ENCODE measurements at regions of chr5 and their contacts with region 1.

Region 1: DNA sequence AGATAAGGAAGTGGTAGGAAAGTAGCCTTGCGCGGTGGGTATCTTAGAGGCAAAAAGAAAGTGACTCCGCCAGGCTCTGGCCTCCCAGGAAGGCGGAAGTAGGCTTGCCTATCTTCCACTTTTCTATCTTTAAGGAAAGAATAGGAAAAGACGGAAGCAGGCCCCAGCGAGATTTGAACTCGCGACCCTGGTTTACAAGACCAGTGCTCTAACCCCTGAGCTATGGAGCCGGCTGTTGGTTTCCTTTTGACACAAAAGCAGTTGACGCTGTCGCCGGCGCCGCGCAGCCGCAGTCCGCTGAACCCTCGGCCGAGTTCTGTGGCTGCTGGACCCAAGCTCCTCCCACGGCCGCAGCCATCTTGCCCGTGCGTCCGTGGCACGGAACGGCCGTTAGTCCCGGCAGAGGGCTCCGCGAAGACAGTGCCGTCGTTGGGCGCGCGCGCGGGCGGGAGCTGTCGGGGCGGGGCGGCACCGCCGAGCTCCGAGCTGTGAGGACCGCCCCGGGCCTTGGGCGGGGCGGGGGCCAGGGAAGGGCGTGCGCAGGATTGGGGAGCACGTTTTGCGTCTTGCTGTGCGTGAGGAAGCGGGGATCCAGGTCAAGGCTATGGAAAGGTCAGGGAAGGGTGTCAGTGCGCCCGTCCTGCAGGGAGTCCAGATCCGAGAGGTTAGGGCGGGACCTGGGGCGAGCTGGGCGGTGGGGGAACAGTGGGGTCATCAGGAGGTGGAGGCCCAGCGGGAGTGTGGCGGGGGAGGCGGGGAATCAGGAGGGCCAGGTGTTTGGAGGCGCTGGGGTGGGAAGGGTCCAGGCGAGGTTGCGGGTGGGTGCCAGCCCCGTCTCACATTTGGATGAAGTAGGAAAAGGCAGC is 13.2 kb downstream of the TRIM7 start:
- DNase-seq: peak; percentile 94
- H3K4me3 ChIP-seq: peak overlapping the region; percentile 71
- H3K27ac ChIP-seq: peak overlapping the region; percentile 84
- H3K4me1 ChIP-seq: no peaks in the 10 kb centered on the region
- H3K27me3 ChIP-seq: no peaks in the 10 kb centered on the region
- CTCF ChIP-seq: no peak

Region 2: DNA sequence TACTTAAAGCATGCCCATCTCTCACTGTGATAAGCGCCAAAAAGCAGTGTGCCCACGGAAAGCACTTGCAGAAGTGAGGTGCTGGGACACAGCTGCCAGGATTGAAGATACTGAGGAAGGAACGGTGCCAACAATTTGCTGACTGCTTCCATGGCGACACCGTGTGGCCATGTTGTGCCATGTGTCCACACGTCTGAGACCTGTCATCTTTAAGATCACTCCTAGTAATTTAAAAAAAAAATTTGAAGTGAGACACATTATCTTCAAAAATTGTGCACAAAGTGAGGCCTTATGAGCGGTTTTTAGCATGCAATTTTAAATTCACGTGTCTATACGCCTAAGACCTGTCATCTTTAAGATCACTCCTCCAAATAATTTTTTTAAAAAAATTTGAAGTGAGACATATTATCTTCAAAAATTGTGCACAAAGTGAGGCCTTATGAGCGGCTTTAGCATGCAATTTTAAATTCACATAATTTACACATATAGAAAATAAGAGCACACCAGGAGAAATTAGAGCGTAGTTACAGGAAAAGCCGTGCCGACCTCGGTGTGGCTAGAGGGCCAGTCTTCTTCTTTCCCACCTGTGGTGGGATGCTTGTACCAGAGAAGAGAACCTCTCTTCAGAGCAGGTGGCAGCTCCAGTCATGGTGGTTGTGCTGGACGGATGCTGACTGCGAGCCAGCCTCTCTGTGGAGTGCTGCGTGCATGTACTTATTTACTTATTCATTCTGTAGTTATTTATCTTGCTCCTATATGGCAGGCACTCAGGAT is 521.0 kb before region 1 on chr5:
- CTCF ChIA-PET with region 1: no interaction called
- POLR2A ChIA-PET with region 1: no interaction called
- intact Hi-C with region 1: no loop called
- DNase-seq: peak; percentile 49
- H3K4me3 ChIP-seq: no peak overlapping the region
- H3K27ac ChIP-seq: no peak overlapping the region
- H3K4me1 ChIP-seq: no peaks in the 10 kb centered on the region
- H3K27me3 ChIP-seq: peaks cover 15% of the 10 kb centered on the region
- CTCF ChIP-seq: peak; percentile 76

Region 3: DNA sequence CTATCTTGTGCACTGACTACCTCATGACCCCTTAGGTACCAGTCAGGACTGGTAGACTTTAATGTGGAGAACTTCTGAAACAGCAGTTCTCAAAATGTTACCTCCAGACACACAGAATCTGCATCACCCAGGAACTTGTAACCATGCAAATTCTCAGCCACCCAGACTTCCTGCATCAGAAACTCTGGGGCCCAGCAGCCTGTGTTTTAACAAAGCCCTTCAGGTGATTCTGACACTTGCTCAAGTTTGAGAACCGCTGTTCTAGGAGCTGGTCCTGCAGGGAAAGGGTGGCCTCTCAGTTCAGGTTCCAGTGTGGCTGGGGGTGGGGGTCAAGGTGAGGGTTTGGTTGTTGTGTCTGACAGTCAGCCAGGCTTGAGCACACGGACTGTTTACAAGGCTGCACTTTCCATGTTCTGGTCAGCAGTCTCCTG is 359.1 kb before region 1 on chr5:
- CTCF ChIA-PET with region 1: no interaction called
- POLR2A ChIA-PET with region 1: no interaction called
- intact Hi-C with region 1: no loop called
- DNase-seq: no peak
- H3K4me3 ChIP-seq: no peak overlapping the region
- H3K27ac ChIP-seq: no peak overlapping the region
- H3K4me1 ChIP-seq: no peaks in the 10 kb centered on the region
- H3K27me3 ChIP-seq: no peaks in the 10 kb centered on the region
- CTCF ChIP-seq: no peak

Region 4: GRCh38 chr5:181207214-181208107 is 15.7 kb after region 1 on chr5:
- CTCF ChIA-PET with region 1: interaction called, 4 read pairs
- POLR2A ChIA-PET with region 1: no interaction called
- intact Hi-C with region 1: loop called (anchors 1 kb)
- DNase-seq: peak; percentile 93
- H3K4me3 ChIP-seq: peak overlapping the region; percentile 72
- H3K27ac ChIP-seq: peak overlapping the region; percentile 85
- H3K4me1 ChIP-seq: peaks cover 6% of the 10 kb centered on the region
- H3K27me3 ChIP-seq: no peaks in the 10 kb centered on the region
- CTCF ChIP-seq: no peak

Region 5: GRCh38 chr5:181217803-181218062 is 26.0 kb after region 1 on chr5:
- CTCF ChIA-PET with region 1: no interaction called
- POLR2A ChIA-PET with region 1: no interaction called
- intact Hi-C with region 1: loop called (anchors 1 kb)
- DNase-seq: no peak
- H3K4me3 ChIP-seq: peak overlapping the region; percentile 63
- H3K27ac ChIP-seq: no peak overlapping the region
- H3K4me1 ChIP-seq: no peaks in the 10 kb centered on the region
- H3K27me3 ChIP-seq: no peaks in the 10 kb centered on the region
- CTCF ChIP-seq: no peak

Region 6: GRCh38 chr5:181223058-181223728 is 31.4 kb after region 1 on chr5 and contains the start of gene TRIM41:
- CTCF ChIA-PET with region 1: no interaction called
- POLR2A ChIA-PET with region 1: no interaction called
- intact Hi-C with region 1: loop called (anchors 1 kb)
- DNase-seq: peak; percentile 98
- H3K4me3 ChIP-seq: peak within 1 kb of the TSS; percentile 83
- H3K27ac ChIP-seq: peak within 1 kb of the TSS; percentile 96
- H3K4me1 ChIP-seq: peaks cover 11% of the 10 kb centered on the region
- H3K27me3 ChIP-seq: no peaks in the 10 kb centered on the region
- CTCF ChIP-seq: no peak
- total RNA-seq, gene TRIM41: 24.2 and 24.6 TPM in 2 replicates